Calu3 (cell line): ENCODE measurements at regions of chr7 and their contacts with region 1.

Region 1: DNA sequence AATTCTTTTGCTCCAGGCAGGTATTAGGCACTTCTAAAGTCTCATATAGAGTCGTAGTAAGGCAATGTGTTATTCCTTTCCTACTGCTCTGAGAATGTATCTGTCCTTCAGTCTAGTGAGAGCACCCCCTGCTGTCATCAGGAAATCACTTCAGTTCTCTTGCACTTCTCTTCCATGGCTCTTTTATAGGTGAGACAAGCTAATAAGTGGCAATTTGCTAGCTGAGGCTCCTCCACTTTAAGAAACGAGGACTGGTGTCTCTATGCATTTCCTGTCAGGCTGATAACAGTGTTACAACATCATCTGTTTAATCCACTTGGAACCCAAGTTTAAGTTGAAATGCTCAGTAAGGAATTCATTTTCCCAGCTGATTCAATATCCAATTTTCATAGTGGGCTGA is 350.6 kb downstream of the TFEC start:
- DNase-seq: peak; percentile 49
- H3K4me3 Mint-ChIP-seq: no peak overlapping the region
- H3K27ac Mint-ChIP-seq: no peak overlapping the region
- H3K4me1 Mint-ChIP-seq: peaks cover 29% of the 10 kb centered on the region
- H3K27me3 Mint-ChIP-seq: no peaks in the 10 kb centered on the region
- CTCF ChIP-seq: peak; percentile 43

Region 2: DNA sequence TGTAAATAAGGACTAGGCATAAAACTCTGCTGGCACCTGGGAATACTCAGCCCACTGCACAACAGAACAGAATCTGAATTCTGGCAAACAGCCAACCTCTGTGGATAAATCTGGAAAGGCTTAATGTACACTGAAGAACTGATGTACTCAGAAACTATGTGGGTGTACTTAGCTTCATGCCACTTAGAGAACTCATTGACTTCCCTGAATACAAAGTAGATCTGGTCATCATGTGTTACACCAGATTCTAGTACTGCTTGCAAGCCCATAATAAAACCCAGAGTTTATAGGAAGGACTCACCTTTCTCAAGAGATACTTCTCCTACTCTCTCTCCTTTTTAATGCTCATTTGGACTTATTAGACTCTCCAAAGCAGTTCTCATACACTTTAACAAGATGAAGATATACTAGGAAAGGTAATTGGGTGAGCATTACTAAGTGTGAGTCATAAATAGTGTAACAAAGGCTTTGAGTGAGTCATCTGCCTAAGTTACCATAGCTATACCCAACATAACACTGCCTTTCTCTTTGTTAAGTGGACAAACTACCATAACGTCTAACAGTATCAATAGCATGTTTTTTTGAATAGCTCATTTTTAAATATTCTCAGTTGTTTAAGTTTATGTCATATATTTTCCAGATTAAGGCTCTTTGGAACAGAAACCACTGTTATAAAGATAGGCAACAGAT is 448.9 kb before region 1 on chr7:
- CTCF ChIA-PET with region 1: no interaction called
- intact Hi-C with region 1: loop called (anchors 5 kb)
- DNase-seq: peak; percentile 32
- H3K4me3 Mint-ChIP-seq: no peak overlapping the region
- H3K27ac Mint-ChIP-seq: peak overlapping the region; percentile 97
- H3K4me1 Mint-ChIP-seq: peaks cover 9% of the 10 kb centered on the region
- H3K27me3 Mint-ChIP-seq: no peaks in the 10 kb centered on the region
- CTCF ChIP-seq: no peak

Region 3: DNA sequence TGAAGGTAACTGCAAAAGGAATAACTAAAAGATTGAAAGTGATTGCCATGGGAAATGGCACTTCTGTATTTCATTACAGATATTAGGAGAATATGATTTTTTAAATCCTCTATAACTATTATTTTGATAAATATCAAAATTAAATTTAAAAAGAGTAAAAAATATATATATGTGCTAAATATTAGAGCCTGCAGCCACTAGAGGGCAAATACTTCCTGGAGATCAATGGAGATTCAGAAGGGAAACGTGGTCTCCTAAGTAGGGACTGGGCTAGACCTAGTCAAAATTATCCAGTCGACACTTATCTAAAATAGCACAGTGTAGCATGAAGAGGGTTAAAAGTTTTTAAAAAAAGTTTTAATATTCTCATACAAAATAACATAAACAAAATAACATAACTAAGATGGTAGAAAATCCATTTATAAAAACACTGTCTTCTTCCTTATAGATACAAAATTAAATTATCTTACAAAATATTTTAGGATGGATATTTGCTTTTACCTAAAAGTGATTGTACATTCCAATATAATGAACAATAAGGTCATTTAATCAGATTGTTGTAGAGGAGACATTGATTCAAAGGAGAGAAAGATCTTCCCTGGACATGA is 323.7 kb before region 1 on chr7:
- CTCF ChIA-PET with region 1: no interaction called
- intact Hi-C with region 1: loop called (anchors 2 kb)
- DNase-seq: peak; percentile 14
- H3K4me3 Mint-ChIP-seq: no peak overlapping the region
- H3K27ac Mint-ChIP-seq: no peak overlapping the region
- H3K4me1 Mint-ChIP-seq: peaks cover 9% of the 10 kb centered on the region
- H3K27me3 Mint-ChIP-seq: no peaks in the 10 kb centered on the region
- CTCF ChIP-seq: peak; percentile 40

Region 4: GRCh38 chr7:115511330-115511729 is 168.6 kb before region 1 on chr7:
- CTCF ChIA-PET with region 1: no interaction called
- intact Hi-C with region 1: loop called (anchors 2 kb)
- DNase-seq: peak; percentile 8
- H3K4me3 Mint-ChIP-seq: no peak overlapping the region
- H3K27ac Mint-ChIP-seq: no peak overlapping the region
- H3K4me1 Mint-ChIP-seq: no peaks in the 10 kb centered on the region
- H3K27me3 Mint-ChIP-seq: no peaks in the 10 kb centered on the region
- CTCF ChIP-seq: no peak

Region 5: GRCh38 chr7:115654384-115655214 is 25.4 kb before region 1 on chr7:
- CTCF ChIA-PET with region 1: no interaction called
- intact Hi-C with region 1: no loop called
- DNase-seq: peak; percentile 12
- H3K4me3 Mint-ChIP-seq: peak overlapping the region; percentile 26
- H3K27ac Mint-ChIP-seq: peak overlapping the region; percentile 93
- H3K4me1 Mint-ChIP-seq: peaks cover 17% of the 10 kb centered on the region
- H3K27me3 Mint-ChIP-seq: no peaks in the 10 kb centered on the region
- CTCF ChIP-seq: no peak

Region 6: DNA sequence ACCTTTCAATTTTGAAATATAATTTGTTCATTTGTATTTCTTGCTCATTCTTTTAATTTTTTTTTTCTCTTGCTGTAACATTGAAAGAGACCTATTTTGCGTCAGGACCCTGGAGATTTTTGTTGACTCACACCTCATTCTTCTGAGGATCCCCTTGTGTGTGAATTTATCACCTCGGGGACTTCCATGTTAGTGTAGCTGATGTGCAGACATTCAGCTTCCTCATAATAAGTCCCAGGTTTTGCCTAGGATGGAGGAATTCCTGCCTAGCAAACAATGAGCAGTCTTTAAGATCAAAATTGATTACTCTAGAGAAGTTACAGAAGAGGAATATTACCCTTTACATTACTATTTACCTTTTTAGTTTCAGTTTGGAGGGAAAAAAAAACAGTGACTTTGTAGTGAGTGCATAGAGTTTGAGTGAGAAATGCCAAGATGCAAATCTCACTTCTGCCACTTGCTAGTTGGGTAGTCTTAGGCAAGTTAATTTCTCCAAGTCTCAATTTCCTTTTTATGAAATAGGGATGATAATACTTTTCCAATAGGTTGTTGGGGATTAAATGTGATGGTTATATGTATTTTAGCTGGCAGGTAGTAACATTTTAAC is 544.6 kb after region 1 on chr7:
- CTCF ChIA-PET with region 1: no interaction called
- intact Hi-C with region 1: no loop called
- DNase-seq: no peak
- H3K4me3 Mint-ChIP-seq: no peak overlapping the region
- H3K27ac Mint-ChIP-seq: peak overlapping the region; percentile 39
- H3K4me1 Mint-ChIP-seq: peaks cover 61% of the 10 kb centered on the region
- H3K27me3 Mint-ChIP-seq: no peaks in the 10 kb centered on the region
- CTCF ChIP-seq: no peak